WTC11 (cell line): ENCODE measurements at regions of chr4 and their contacts with region 1.

Region 1: DNA sequence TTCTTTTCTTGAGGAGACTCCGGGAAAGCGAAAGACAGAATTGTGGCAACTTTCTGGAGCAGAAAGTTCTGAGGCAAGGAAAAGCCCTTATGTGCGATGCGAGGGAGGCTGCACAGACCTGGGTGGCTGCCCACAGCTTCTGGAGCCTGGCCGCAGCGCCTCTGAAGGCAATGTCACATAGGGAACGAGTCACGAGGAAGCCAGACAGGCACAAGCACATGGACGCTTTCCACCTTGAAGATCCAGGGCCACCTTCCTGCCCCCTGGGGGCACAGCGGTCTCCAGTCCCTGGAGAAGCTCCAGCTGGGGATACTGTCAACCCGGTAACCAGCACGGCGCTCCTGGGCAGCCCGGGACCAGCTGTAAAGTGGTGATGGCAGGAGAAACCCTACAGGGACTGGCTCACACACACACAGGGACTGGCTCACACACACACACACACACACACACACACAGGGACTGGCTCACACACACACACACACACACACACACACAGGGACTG is 69.8 kb downstream of the MTNR1A start:
- DNase-seq: no peak
- ATAC-seq: no peak; the same call in 1 of the 2 replicates
- H3K4me3 Mint-ChIP-seq: no peak overlapping the region
- H3K27ac Mint-ChIP-seq: no peak overlapping the region
- H3K4me1 Mint-ChIP-seq: peaks cover 17% of the 10 kb centered on the region
- H3K27me3 Mint-ChIP-seq: no peaks in the 10 kb centered on the region
- CTCF ChIP-seq: no peak

Region 2: DNA sequence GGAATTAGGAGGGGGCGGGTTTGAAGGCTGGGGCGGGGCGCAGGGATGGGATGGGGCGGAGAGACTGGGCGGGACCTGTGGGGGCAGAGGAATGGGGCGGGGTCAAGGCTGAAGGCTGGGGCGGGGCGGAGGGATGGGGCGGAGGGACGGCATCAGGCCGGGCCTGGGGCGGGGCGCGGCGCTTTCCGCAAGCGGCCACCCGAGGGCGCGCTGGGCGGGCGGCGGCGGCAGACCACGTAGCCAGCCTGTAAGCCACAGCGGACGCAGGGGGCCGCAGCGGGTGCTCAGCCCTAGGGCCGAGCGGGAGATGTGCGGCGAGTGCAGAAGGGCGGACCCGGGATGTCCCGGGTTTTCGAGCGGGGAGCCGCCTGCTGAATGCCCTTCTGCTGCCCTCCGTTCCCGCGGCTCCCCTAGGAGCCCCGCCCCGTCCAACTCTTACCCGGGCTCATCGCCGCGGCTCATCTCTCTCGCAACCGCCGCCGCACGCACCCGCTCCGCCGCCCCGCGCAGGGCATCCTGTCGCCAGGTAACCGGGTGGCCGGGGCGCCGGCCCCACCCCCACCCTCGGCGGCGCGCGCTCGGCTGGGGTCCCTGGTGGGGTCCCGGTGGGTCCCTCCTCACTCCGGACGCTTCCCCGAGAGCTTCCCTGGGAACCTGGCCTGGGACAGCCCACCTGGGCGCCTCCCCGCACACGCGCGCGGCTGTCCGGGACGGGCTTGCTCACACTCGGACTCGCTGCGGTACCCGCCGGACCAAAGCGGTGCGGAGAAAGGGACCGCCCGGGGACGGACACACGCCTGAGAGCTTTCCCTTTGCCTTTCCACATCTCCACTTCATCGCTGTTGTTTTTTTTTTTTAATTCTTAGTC is 1014.1 kb before region 1 on chr4 and contains the start of gene CCDC110:
- CTCF ChIA-PET with region 1: no interaction called
- POLR2A ChIA-PET with region 1: interaction called, 10 read pairs
- DNase-seq: peak; percentile 95
- ATAC-seq: peak; percentile 98
- H3K4me3 Mint-ChIP-seq: peak within 1 kb of the TSS; percentile 84
- H3K27ac Mint-ChIP-seq: no peak within 1 kb of the TSS
- H3K4me1 Mint-ChIP-seq: peaks cover 10% of the 10 kb centered on the region
- H3K27me3 Mint-ChIP-seq: peaks cover 58% of the 10 kb centered on the region
- CTCF ChIP-seq: peak; percentile 51
- total RNA-seq, gene CCDC110: 2.1 to 2.9 TPM (median 2.2 TPM) in 3 replicates

Region 3: DNA sequence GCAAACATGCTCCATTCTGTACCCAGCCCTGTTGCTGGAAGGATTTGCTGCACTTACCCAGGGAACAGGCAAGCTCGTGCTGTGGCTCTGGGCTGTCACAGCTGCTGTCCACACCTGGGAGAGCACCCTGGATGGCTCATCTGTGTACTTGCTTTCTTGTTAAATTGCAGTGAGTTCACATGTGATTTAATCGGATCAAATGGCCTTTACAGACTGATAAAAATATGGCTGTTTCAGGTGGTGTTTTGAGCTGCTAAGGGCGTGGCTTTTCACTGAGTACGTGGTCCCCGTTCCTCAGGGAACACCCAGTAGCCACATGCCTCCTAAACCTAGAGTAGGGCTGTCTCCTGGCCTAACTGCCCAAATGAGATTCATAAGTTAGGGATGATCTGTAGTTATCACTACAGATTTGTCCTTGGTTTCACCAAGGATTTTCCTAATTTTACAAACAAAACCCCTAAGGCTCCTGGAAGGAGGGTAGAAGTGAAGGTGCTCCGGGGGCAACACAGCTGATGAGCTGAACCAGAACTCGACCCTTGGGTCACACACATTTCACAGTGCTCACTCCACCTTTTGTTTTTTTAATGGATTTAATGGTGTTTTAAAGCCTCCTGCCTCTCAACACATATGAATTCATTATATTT is 244.6 kb before region 1 on chr4:
- CTCF ChIA-PET with region 1: no interaction called
- POLR2A ChIA-PET with region 1: no interaction called
- DNase-seq: no peak
- ATAC-seq: peak; percentile 78
- H3K4me3 Mint-ChIP-seq: no peak overlapping the region
- H3K27ac Mint-ChIP-seq: no peak overlapping the region
- H3K4me1 Mint-ChIP-seq: peaks cover 10% of the 10 kb centered on the region
- H3K27me3 Mint-ChIP-seq: no peaks in the 10 kb centered on the region; the same call in 1 of the 2 replicates
- CTCF ChIP-seq: no peak

Region 4: GRCh38 chr4:186304866-186305511 is 180.6 kb before region 1 on chr4:
- CTCF ChIA-PET with region 1: no interaction called
- POLR2A ChIA-PET with region 1: no interaction called
- DNase-seq: no peak
- ATAC-seq: no peak
- H3K4me3 Mint-ChIP-seq: no peak overlapping the region
- H3K27ac Mint-ChIP-seq: no peak overlapping the region
- H3K4me1 Mint-ChIP-seq: peaks cover 2% of the 10 kb centered on the region; the same call in 1 of the 2 replicates
- H3K27me3 Mint-ChIP-seq: 0 out of 2 replicates have a peak, but pooled peaks cover 2% of the 10 kb centered on the region
- CTCF ChIP-seq: no peak

Region 5: DNA sequence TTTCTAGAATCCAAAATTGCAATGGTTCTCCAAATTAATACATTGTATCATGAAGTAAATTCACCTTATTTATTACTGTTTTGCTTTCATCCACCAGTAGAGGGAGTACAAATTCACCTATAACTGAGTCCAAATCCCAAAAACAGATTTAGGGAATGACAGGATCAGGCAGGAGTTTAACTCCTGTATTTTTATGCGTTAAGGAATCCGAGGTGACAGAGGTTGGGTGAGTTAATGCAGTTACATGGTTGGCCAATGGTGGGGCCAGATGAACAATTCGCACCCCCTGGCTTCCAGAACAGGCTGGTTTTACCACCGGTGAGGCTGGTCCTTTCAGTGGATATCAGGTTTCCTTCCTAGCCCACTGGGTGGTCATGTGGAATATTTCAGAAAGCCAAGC is 12.7 kb before region 1 on chr4:
- CTCF ChIA-PET with region 1: interaction called, 14 read pairs
- POLR2A ChIA-PET with region 1: no interaction called
- DNase-seq: peak; percentile 32
- ATAC-seq: peak; percentile 90
- H3K4me3 Mint-ChIP-seq: no peak overlapping the region
- H3K27ac Mint-ChIP-seq: no peak overlapping the region
- H3K4me1 Mint-ChIP-seq: peaks cover 15% of the 10 kb centered on the region
- H3K27me3 Mint-ChIP-seq: no peaks in the 10 kb centered on the region; the same call in 1 of the 2 replicates
- CTCF ChIP-seq: peak; percentile 45; the same call in 1 of the 2 replicates

Region 6: GRCh38 chr4:186500721-186501304 is 15.2 kb after region 1 on chr4:
- CTCF ChIA-PET with region 1: no interaction called
- POLR2A ChIA-PET with region 1: no interaction called
- DNase-seq: peak; percentile 16
- ATAC-seq: peak; percentile 36
- H3K4me3 Mint-ChIP-seq: no peak overlapping the region
- H3K27ac Mint-ChIP-seq: no peak overlapping the region; the same call in 1 of the 2 replicates
- H3K4me1 Mint-ChIP-seq: peaks cover 6% of the 10 kb centered on the region
- H3K27me3 Mint-ChIP-seq: peaks cover 3% of the 10 kb centered on the region; the same call in 1 of the 2 replicates
- CTCF ChIP-seq: no peak